Activated CD8-positive, alpha-beta memory T cell treated with anti-CD3 and anti-CD28 coated beads, Interleukin-2, amount 10 ng/mL, durations not matched to agents 7 days and 5 days (primary cell): ENCODE measurements at regions of chr5 and their contacts with region 1.

Region 1: DNA sequence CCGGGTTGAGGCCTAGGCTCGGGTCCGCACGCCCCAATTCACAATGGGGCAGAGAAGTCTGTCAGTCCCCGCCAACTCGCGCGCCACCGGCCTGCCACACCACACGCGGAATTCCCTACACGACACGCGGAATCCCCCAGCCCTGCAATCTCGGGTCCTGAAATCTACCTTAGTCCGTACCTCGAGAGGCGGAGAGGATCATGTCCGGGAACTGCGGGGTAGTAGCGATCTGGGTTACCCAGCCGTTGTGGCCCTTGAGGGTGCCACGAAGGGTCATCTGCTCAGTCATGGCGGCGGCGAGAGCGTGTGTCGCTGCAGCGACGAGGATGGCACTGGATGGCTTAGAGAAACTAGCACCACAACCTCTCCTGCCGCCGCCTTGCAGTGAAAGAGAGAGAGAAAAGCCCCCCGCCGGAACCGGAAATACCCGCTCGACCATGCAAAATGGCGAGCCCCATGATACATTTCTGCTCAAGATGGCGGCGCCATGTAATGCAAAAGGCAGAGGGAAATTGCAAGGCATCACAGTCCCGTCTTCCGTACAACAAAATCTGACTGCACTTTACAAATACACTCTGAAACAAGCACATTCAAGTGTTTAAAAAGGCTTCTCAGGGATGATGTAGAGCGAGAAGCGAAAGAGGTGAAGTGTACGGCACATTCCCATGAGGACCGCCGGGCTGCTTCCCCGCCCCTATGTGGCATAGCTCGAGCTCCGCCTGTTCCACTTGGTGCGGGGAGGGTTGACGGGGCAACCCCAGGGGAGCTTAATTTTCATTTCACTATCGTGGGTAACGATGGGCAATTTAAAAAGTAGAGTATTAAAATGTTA is at the start of gene RACK1:
- DNase-seq: peak; percentile 94
- ATAC-seq: peak; percentile 70
- H3K4me3 Mint-ChIP-seq: peak within 1 kb of the TSS; percentile 94
- H3K27ac Mint-ChIP-seq: peak within 1 kb of the TSS; percentile 98
- H3K4me1 Mint-ChIP-seq: peaks cover 61% of the 10 kb centered on the region
- H3K27me3 Mint-ChIP-seq: no peaks in the 10 kb centered on the region
- total RNA-seq, gene RACK1: 1,565 to 1,861 TPM

Region 2: DNA sequence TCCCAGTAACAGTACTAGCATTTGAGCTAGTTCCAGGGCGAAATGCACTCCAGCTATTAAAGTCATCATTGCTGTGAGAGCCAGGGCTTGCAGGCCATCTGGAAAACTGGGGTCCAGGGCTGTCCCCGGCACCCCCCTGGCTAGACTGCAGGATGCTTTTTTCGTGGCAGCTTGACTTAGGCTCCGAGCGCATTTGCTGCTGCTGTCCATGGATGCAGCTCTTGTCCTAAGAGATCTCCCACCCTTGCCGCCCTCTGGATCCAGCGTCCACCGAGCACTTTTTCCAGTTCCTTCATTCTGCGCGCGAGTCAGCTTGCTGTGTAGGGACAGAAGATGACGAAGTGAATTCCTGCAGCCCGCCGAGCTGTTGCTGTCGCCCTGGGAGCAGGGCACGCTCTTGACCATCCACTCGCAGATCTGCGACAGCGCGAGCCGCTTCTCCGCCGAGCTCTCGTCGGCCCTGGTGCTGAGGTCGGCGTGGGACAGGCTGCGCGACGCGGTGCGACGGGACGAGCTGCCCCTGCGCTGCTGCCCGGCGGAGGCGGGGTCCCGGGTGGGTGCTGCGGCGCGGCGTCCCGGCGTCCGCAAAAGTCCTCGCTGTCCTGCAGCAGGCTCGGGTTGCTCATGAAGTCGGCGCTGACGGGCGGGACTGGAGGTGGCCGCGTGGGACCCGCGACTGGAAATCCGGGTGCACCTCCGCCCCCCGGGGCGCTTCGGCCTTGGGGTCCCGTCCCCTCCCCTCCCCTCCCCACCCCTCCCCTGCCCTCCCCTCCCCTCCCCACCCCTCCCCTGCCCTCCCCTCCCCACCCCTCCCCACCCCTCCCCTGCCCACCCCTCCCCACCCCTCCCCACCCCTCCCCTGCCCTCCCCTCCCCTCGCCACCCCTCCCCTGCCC is 143.4 kb before region 1 on chr5:
- CTCF ChIA-PET with region 1: no interaction called
- DNase-seq: no peak
- ATAC-seq: no peak
- H3K4me3 Mint-ChIP-seq: no peak overlapping the region
- H3K27ac Mint-ChIP-seq: no peak overlapping the region
- H3K4me1 Mint-ChIP-seq: peaks cover 10% of the 10 kb centered on the region
- H3K27me3 Mint-ChIP-seq: peaks cover 34% of the 10 kb centered on the region

Region 3: GRCh38 chr5:181207214-181208107 is 36.3 kb before region 1 on chr5:
- CTCF ChIA-PET with region 1: no interaction called
- DNase-seq: peak; percentile 91
- ATAC-seq: peak; percentile 57
- H3K4me3 Mint-ChIP-seq: peak overlapping the region; percentile 85
- H3K27ac Mint-ChIP-seq: peak overlapping the region; percentile 90
- H3K4me1 Mint-ChIP-seq: peaks cover 27% of the 10 kb centered on the region
- H3K27me3 Mint-ChIP-seq: peaks cover 27% of the 10 kb centered on the region

Region 4: DNA sequence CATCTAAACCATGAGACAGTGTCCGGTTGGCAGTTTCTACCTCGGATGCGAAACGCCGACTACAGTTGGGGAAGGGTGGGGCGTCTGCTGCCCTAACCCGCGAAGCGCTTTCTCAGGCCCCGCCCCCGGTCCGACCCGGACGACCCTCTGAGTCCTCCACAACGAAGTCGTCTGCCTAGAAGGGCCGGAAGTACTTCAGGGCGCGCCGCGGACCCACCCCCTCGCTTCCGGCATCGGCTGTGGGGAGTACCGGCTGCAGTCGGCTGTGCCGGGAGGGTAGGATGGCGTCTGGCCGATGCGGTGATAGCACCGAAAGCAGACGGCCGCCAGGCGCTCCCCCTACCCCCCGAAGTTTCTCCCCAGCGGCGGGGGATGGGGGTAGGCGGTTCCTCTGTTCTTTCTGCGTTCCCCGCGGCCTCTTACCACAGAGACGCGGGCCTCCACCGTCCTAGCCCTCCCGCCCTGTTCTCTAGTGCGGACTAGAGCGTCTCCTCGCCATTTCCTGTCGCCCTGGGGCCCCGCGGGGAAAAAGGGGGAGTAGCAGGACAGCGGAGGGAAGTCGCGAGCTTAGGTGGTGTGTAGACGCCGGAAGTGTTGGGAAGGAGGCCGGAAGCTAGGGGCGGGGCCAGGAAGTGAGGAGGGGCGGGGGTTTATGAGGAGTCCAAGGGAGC is 20.5 kb before region 1 on chr5 and contains the start of gene TRIM41:
- CTCF ChIA-PET with region 1: interaction called, 18 read pairs
- DNase-seq: peak; percentile 99
- ATAC-seq: peak; percentile 65
- H3K4me3 Mint-ChIP-seq: peak within 1 kb of the TSS; percentile 89
- H3K27ac Mint-ChIP-seq: peak within 1 kb of the TSS; percentile 99
- H3K4me1 Mint-ChIP-seq: peaks cover 59% of the 10 kb centered on the region
- H3K27me3 Mint-ChIP-seq: peaks cover 5% of the 10 kb centered on the region
- total RNA-seq, gene TRIM41: 40.7 to 44.9 TPM

Region 5: DNA sequence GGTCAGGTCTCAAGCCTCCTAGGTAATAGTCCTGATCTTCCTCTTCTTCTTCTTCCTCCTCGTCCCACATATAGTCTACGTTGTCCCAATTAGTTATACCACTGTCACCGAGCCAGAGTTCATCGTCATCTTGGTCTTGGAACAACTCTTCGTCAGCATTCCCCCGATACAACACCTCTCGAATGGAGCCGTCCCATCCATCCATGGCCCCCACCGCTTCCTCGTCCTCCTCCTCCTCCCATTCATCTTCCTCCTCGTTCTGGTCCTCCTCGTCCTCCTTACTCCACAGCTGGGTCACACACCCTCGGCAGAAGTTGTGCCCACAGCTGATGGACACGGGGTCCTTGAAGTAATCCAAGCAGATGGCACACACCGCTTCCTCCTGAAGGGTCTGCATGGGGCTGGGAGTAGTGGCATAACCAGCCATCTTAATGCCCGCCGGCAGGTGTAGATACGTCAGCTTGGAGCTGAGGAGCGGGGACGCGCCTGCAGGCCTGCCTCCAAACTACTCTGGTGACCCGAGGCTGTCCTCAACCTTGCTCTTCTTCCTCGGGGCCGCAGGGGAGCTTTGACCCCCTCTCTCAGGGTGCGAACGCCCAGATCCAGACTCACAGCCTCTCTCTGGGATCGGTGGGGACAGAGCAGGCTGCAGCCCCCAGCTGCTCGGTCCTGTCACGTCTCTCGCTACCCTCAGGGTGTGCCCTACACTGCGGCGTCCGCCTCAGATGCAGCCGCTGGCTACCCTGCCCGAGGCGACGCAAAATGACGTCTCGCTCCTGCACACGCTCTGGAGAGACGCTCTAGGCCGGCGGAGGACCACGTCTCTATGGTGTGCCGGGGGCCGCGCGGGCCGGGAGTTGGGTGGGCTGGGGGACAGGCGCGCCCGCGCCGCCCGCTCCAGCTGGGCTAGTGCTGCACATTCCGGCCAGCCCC is 16.9 kb after region 1 on chr5 and contains the start of gene TRIM52:
- CTCF ChIA-PET with region 1: interaction called, 49 read pairs
- DNase-seq: peak; percentile 96
- ATAC-seq: peak; percentile 84
- H3K4me3 Mint-ChIP-seq: peak within 1 kb of the TSS; percentile 96
- H3K27ac Mint-ChIP-seq: peak within 1 kb of the TSS; percentile 95
- H3K4me1 Mint-ChIP-seq: peaks cover 42% of the 10 kb centered on the region
- H3K27me3 Mint-ChIP-seq: no peaks in the 10 kb centered on the region
- total RNA-seq, gene TRIM52: 20.0 to 26.2 TPM

Region 6: GRCh38 chr5:181283347-181283746 is 39.6 kb after region 1 on chr5:
- CTCF ChIA-PET with region 1: no interaction called
- DNase-seq: no peak
- ATAC-seq: no peak
- H3K4me3 Mint-ChIP-seq: no peak overlapping the region
- H3K27ac Mint-ChIP-seq: no peak overlapping the region
- H3K4me1 Mint-ChIP-seq: peaks cover 2% of the 10 kb centered on the region
- H3K27me3 Mint-ChIP-seq: no peaks in the 10 kb centered on the region